ENCODE measurements at regions of chr7 and their contacts with region 1.

Region 1: DNA sequence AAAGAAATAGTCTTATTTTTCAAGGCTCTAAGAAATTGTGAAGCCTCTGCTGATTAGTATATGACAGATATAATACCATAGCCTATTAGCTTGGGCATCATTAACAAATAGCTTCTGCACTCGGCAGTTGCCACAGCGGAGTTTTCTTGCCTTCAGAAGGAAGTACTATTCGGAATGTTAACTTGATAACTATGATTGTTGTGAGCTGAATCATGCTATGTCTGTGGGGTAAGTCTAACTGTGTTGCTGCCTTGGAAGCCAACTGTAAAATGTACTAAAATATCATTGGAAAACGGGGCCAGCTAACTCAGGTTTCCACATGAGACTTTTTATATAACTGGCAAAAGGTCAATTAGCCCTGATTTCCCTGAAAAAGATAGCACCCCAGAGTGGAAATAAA is 93.2 kb downstream of the TWIST1 start:
- DNase-seq: peak; percentile 45
- H3K4me3 ChIP-seq: no peak overlapping the region
- H3K27ac ChIP-seq: no peak overlapping the region
- H3K4me1 ChIP-seq: peaks cover 38% of the 10 kb centered on the region
- H3K27me3 ChIP-seq: no peaks in the 10 kb centered on the region
- CTCF ChIP-seq: no peak

Region 2: DNA sequence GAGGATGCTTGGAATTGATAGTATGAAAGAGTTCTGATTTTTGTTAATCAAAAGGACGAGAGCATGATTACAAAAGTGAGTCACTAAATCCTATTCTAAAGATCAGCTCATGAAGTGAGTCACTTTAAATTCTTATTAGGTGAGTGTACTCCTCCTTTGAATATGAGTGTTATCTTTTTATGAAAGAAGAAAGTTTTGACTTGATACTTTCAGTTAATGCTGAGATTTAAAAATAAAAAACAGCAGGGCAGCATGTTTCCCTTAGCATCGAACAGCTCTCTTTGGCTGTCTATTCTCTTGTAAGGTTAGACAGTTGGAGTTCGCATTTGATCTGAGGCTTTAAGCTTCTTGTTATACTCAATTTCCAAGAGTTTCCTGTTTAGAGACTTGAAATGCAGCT is 128.8 kb before region 1 on chr7:
- CTCF ChIA-PET with region 1: no interaction called
- dilution Hi-C with region 1: no loop called
- in situ Hi-C with region 1: no loop called
- intact Hi-C with region 1: loop called (anchors 10 kb)
- DNase-seq: peak; percentile 76
- H3K4me3 ChIP-seq: peak overlapping the region in 2 of 3 experiments; percentile 35 to 45
- H3K27ac ChIP-seq: peak overlapping the region; percentile 94
- H3K4me1 ChIP-seq: peaks cover 25% of the 10 kb centered on the region
- H3K27me3 ChIP-seq: no peaks in the 10 kb centered on the region
- CTCF ChIP-seq: no peak

Region 3: GRCh38 chr7:18971839-18972238 is 52.4 kb before region 1 on chr7:
- CTCF ChIA-PET with region 1: no interaction called
- dilution Hi-C with region 1: no loop called
- in situ Hi-C with region 1: no loop called
- intact Hi-C with region 1: loop called (anchors 1 kb)
- DNase-seq: no peak
- H3K4me3 ChIP-seq: no peak overlapping the region
- H3K27ac ChIP-seq: no peak overlapping the region
- H3K4me1 ChIP-seq: peaks cover 45% of the 10 kb centered on the region
- H3K27me3 ChIP-seq: no peaks in the 10 kb centered on the region
- CTCF ChIP-seq: no peak

Measured in mammary epithelial cell (primary cell).